Right ventricle myocardium inferior (tissue), 1 donor: ENCODE measurements at regions of chr15 and their contacts with region 1.

Region 1: DNA sequence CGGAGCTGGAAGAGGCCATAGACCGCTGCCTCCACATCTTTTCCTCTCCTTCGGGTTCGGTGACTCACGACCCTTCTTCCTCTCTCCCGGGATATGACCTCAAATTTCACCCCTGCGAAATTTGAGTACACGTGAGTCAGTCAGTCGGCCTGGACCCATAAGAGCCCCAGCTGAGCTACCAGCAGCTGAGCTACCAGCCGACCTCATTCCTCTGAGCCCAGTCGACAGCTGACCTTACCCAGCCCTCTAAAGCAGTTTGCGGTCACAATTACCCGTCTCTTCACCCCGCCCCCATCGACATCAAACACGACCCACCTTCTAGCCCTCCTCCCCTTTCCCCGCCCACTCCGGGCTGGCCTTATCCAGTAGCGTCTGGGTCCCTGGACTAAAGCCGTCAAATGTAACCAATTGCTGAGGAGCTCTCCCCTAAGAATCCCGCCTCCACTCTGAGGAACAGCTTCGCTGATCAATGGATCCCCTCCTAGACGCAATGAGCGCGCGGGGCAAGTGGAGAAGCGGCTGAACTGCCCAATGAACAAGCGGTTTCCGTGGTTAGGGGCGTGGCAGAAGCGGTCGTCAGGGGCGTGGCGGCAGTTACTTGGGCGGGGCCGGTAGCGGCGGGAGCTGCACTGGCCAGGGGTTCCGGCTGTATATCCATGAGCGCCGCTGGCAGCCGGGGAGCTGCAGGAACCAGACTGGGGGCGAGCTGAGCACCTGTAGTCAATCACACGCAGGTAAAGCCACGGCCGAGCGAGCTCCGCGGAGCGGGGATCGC is at the start of gene ABHD2:
- DNase-seq: peak; percentile 99
- ATAC-seq: peak; percentile 96
- total RNA-seq, gene ABHD2: 69.9 TPM

Region 2: GRCh38 chr15:89105147-89105546 is 17.1 kb after region 1 on chr15:
- intact Hi-C with region 1: loop called (anchors 2 kb)
- DNase-seq: no peak
- ATAC-seq: peak; percentile 18

Region 3: DNA sequence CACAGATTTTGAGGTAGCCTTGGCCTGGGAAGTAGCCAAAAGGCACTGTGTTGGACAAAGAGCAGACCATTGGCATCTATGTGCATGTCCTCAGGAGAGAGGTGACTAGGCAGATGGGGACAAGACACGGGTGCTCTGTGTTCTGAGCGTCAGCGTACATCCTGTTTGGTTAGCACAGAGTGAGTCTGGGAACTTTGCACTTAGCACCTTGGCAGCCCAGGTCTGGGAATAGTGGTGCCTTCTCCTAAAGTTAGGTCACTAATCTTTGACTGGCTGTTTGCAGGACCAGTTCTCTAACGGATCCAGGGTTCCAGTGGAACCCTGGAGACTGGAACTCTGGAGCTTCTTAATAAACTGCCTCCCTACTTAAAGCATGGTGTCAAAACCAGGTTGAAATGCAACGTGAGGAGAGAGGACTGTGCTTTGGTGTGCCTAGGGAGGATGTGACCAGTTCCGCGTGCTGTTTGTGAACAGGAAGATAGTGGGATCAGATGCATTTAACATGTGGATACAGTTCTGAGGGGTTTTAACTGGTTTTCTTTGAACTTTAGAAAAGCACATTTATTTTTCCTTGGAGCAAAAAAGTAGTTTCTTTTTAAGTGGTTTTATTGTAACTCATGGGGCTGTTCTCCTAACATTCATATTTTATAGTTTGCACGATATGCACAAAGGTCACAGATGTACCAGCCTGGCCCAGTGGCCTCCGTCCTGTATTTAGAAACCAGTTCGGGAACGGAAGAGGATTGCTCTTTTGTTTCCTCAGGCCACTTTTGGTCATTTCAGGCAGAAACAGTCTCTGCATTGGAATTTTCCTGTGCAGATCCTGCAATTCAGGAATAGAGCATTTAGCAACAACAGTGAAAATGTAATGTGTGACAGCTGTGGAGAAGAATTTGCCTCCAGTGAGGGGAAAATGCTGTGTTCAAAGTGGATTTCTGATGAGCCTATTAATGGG is 49.1 kb after region 1 on chr15:
- intact Hi-C with region 1: loop called (anchors 2 kb)
- DNase-seq: no peak
- ATAC-seq: peak; percentile 93

Region 4: GRCh38 chr15:89171136-89172072 is 83.4 kb after region 1 on chr15:
- intact Hi-C with region 1: loop called (anchors 5 kb)
- DNase-seq: no peak
- ATAC-seq: no peak